CD4-positive, alpha-beta memory T cell (primary cell): ENCODE measurements at regions of chr20 and their contacts with region 1.

Region 1: GRCh38 chr20:33810885-33811777 is at the start of gene CHMP4B:
- DNase-seq: peak; percentile 97 to 99 (median 98)
- H3K4me3 ChIP-seq: peak within 1 kb of the TSS; percentile 71 to 85
- H3K4me3 Mint-ChIP-seq: peak within 1 kb of the TSS; percentile 93 to 99 (median 97)
- H3K27ac ChIP-seq: peak within 1 kb of the TSS; percentile 88
- H3K27ac Mint-ChIP-seq: peak within 1 kb of the TSS; percentile 86 to 99 (median 95)
- H3K4me1 ChIP-seq: peaks cover 38% of the 10 kb centered on the region
- H3K4me1 Mint-ChIP-seq: peaks cover 35 to 52% (median 38%) of the 10 kb centered on the region in 4 donors
- H3K27me3 ChIP-seq: no peaks in the 10 kb centered on the region
- H3K27me3 Mint-ChIP-seq: peaks cover 0 to 2% of the 10 kb centered on the region in 2 donors
- total RNA-seq, gene CHMP4B: 53.0 to 54.0 TPM

Region 2: DNA sequence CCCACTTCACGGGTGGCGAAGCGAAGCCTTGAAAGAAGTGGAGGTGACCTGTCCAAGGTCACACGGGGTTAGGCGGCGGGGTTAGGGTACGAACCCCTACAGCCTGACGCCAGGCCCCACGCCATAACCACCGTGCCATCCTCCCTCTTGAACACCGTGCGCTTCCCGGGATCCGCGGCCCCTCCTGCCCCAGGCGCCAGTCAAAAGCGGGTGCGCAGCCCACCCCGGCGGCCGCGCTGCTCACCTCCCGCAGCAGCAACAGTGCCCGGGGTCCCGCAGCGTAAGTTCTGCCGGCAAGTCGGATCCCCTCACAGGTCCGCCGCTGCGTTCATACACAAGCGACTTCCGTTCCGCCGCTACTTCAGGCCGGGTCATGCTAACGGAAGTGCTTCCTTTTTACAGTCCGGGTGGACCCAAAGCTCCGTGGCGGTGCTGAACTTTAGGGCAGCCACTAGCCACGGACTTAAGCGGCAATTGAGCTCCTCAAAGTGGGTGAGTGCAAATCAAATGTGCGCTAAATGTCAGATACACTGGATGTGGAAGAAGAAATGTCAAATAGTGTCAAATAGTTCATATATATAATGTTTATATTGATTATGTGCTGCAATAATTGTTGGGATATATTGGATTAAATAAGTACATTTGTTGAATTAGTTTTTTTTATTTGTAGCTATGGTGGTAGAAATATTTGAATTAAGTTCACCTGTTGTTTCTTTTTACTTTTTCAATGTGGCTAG is 409.8 kb before region 1 on chr20 and contains the start of gene CDK5RAP1:
- CTCF ChIA-PET with region 1: no interaction called
- POLR2A ChIA-PET with region 1: no interaction called
- intact Hi-C with region 1: loop called (anchors 1 kb)
- DNase-seq: peak; percentile 82 to 88 (median 83)
- H3K4me3 ChIP-seq: peak within 1 kb of the TSS; percentile 100
- H3K4me3 Mint-ChIP-seq: peak within 1 kb of the TSS; percentile 93 to 98 (median 98)
- H3K27ac ChIP-seq: peak within 1 kb of the TSS; percentile 74
- H3K27ac Mint-ChIP-seq: peak within 1 kb of the TSS; percentile 6 to 95 (median 94)
- H3K4me1 ChIP-seq: peaks cover 52% of the 10 kb centered on the region
- H3K4me1 Mint-ChIP-seq: peaks cover 24 to 66% (median 46%) of the 10 kb centered on the region in 4 donors
- H3K27me3 ChIP-seq: no peaks in the 10 kb centered on the region
- H3K27me3 Mint-ChIP-seq: no peaks in the 10 kb centered on the region
- total RNA-seq, gene CDK5RAP1: 50.9 to 51.8 TPM

Region 3: GRCh38 chr20:33686100-33686983 is 124.8 kb before region 1 on chr20 and contains the start of gene E2F1:
- CTCF ChIA-PET with region 1: interaction called, 3 read pairs
- POLR2A ChIA-PET with region 1: no interaction called
- intact Hi-C with region 1: loop called (anchors 1 kb)
- DNase-seq: peak; percentile 91 to 95 (median 93)
- H3K4me3 ChIP-seq: peak within 1 kb of the TSS in 1 of 2 donors; percentile 38
- H3K4me3 Mint-ChIP-seq: peak within 1 kb of the TSS; percentile 82 to 89 (median 86)
- H3K27ac ChIP-seq: peak within 1 kb of the TSS; percentile 54
- H3K27ac Mint-ChIP-seq: peak within 1 kb of the TSS; percentile 84 to 94 (median 91)
- H3K4me1 ChIP-seq: peaks cover 40% of the 10 kb centered on the region
- H3K4me1 Mint-ChIP-seq: peaks cover 26 to 62% (median 43%) of the 10 kb centered on the region in 4 donors
- H3K27me3 ChIP-seq: no peaks in the 10 kb centered on the region
- H3K27me3 Mint-ChIP-seq: no peaks in the 10 kb centered on the region
- total RNA-seq, gene E2F1: 2.2 to 2.6 TPM

Region 4: GRCh38 chr20:33862709-33863403 is 51.7 kb after region 1 on chr20:
- CTCF ChIA-PET with region 1: interaction called, 6 read pairs
- POLR2A ChIA-PET with region 1: interaction called, 30 read pairs
- intact Hi-C with region 1: loop called (anchors 1 kb)
- DNase-seq: peak in 3 of 5 donors; percentile 24 to 39 (median 28)
- H3K4me3 ChIP-seq: no peak overlapping the region
- H3K4me3 Mint-ChIP-seq: peak overlapping the region in 1 of 8 donors; percentile 27
- H3K27ac ChIP-seq: no peak overlapping the region
- H3K27ac Mint-ChIP-seq: no peak overlapping the region
- H3K4me1 ChIP-seq: peaks cover 30% of the 10 kb centered on the region
- H3K4me1 Mint-ChIP-seq: peaks cover 15 to 26% (median 21%) of the 10 kb centered on the region in 4 donors
- H3K27me3 ChIP-seq: no peaks in the 10 kb centered on the region
- H3K27me3 Mint-ChIP-seq: no peaks in the 10 kb centered on the region

Region 5: GRCh38 chr20:34069341-34070078 is 258.4 kb after region 1 on chr20:
- CTCF ChIA-PET with region 1: interaction called, 11 read pairs
- POLR2A ChIA-PET with region 1: no interaction called
- intact Hi-C with region 1: loop called (anchors 1 kb)
- DNase-seq: peak; percentile 50 to 75 (median 54)
- H3K4me3 ChIP-seq: no peak overlapping the region
- H3K4me3 Mint-ChIP-seq: peak overlapping the region in 1 of 8 donors; percentile 20
- H3K27ac ChIP-seq: no peak overlapping the region
- H3K27ac Mint-ChIP-seq: peak overlapping the region; percentile 10 to 88 (median 73)
- H3K4me1 ChIP-seq: peaks cover 17% of the 10 kb centered on the region
- H3K4me1 Mint-ChIP-seq: peaks cover 26 to 44% (median 35%) of the 10 kb centered on the region in 4 donors
- H3K27me3 ChIP-seq: no peaks in the 10 kb centered on the region
- H3K27me3 Mint-ChIP-seq: no peaks in the 10 kb centered on the region